Heart left ventricle (tissue), 16 donors: ENCODE measurements at regions of chr11 and their contacts with region 1.

Region 1: GRCh38 chr11:35246745-35247144 is 107.8 kb downstream of the CD44 start:
- DNase-seq: peak in 4 of 5 donors; percentile 29 to 59 (median 46)
- ATAC-seq: peak; percentile 80 to 95 (median 91)
- H3K4me3 ChIP-seq: no peak overlapping the region
- H3K27ac ChIP-seq: peak overlapping the region; percentile 17 to 91 (median 72)
- H3K4me1 ChIP-seq: peaks cover 0 to 29% (median 16%) of the 10 kb centered on the region in 12 donors
- H3K27me3 ChIP-seq: no peaks in the 10 kb centered on the region
- CTCF ChIP-seq: no peak
- POLR2A ChIP-seq: no peak

Region 2: DNA sequence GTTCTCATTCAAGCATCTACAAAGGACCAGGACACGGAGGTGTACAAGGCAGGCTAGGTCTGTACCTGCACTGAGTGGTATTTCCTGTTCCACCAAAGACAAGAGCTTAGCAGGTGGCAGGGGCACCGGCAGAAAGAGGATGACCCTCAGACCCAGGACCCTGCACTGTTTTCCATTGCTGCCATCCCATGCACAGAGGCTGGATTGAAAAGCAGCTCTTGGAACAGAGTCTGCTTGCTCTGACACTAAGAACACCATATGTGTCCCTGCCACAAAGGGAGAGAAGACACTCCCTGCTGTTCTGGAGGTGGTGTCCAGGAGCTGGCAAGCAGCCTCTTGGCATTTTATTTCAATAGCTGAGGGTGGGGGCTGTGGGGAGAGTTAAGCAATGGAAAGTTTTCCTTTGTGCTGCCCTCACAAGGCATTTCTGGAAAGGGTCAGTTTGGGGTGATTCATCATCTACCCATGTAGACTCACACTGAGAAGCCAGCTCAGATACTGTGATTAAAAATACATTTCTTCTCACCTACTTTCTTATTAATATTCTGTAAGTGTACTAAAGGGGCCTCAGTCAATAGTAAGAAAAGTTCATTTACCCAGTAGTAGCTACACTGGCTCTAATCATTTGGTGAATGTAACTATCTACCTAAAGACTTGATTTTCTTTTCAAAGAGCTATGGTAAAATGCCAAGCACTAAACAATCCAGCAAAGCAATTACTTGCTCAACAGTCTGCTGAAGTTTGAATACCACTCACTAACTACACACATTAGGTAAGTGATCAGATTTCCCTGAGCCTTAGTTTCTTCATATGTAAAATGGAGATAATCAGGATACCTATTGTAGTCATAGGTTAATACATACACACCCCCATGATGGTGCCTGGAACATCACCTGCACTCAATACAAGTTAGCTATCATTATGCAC is 117.4 kb after region 1 on chr11:
- intact Hi-C with region 1: loop called in 1 of 10 experiments (anchors 10 kb)
- DNase-seq: peak in 4 of 5 donors; percentile 55 to 82 (median 59)
- ATAC-seq: peak; percentile 72 to 88 (median 79)
- H3K4me3 ChIP-seq: no peak overlapping the region
- H3K27ac ChIP-seq: peak overlapping the region in 11 of 12 donors; percentile 4 to 88 (median 73)
- H3K4me1 ChIP-seq: peaks cover 2 to 56% (median 30%) of the 10 kb centered on the region in 12 donors
- H3K27me3 ChIP-seq: no peaks in the 10 kb centered on the region
- CTCF ChIP-seq: no peak
- POLR2A ChIP-seq: no peak

Region 3: GRCh38 chr11:35373284-35373933 is 126.7 kb after region 1 on chr11:
- intact Hi-C with region 1: loop called in 2 of 10 experiments (anchors 10 kb)
- DNase-seq: peak in 1 of 5 donors; percentile 21
- ATAC-seq: peak in 3 of 4 donors; percentile 36 to 71 (median 71)
- H3K4me3 ChIP-seq: no peak overlapping the region
- H3K27ac ChIP-seq: peak overlapping the region in 2 of 12 donors; percentile 38 to 41
- H3K4me1 ChIP-seq: peaks cover 0 to 31% (median 9%) of the 10 kb centered on the region in 12 donors
- H3K27me3 ChIP-seq: no peaks in the 10 kb centered on the region
- CTCF ChIP-seq: peak in 2 of 12 donors; percentile 4 to 25
- POLR2A ChIP-seq: no peak

Region 4: GRCh38 chr11:35380586-35380985 is 133.8 kb after region 1 on chr11:
- intact Hi-C with region 1: loop called in 4 of 10 experiments (anchors 5 to 10 kb)
- DNase-seq: peak in 1 of 5 donors; percentile 35
- ATAC-seq: peak; percentile 91 to 96 (median 93)
- H3K4me3 ChIP-seq: peak overlapping the region in 8 of 12 donors; percentile 18 to 43 (median 33)
- H3K27ac ChIP-seq: peak overlapping the region in 11 of 12 donors; percentile 36 to 81 (median 63)
- H3K4me1 ChIP-seq: peaks cover 0 to 25% (median 7%) of the 10 kb centered on the region in 12 donors
- H3K27me3 ChIP-seq: no peaks in the 10 kb centered on the region
- CTCF ChIP-seq: no peak
- POLR2A ChIP-seq: no peak

Region 5: GRCh38 chr11:35464308-35464707 is 217.6 kb after region 1 on chr11:
- intact Hi-C with region 1: no loop called
- DNase-seq: no peak
- ATAC-seq: no peak
- H3K4me3 ChIP-seq: no peak overlapping the region
- H3K27ac ChIP-seq: no peak overlapping the region
- H3K4me1 ChIP-seq: no peaks in the 10 kb centered on the region
- H3K27me3 ChIP-seq: peaks cover 0 to 5% (median 0%) of the 10 kb centered on the region in 9 donors
- CTCF ChIP-seq: no peak
- POLR2A ChIP-seq: no peak